ENCODE measurements at regions of chr1 and their contacts with region 1.

Region 1: GRCh38 chr1:169367486-169368405 is at the starts of genes BLZF1 and NME7:
- DNase-seq: peak; percentile 99
- ATAC-seq: peak; percentile 93
- H3K4me3 Mint-ChIP-seq: no peak within 1 kb of the TSS
- H3K27ac Mint-ChIP-seq: no peak within 1 kb of the TSS
- H3K4me1 Mint-ChIP-seq: peaks cover 31% of the 10 kb centered on the region
- H3K27me3 Mint-ChIP-seq: no peaks in the 10 kb centered on the region
- total RNA-seq, gene BLZF1: 6.5 to 7.1 TPM
- total RNA-seq, gene NME7: 11.6 to 15.3 TPM

Region 2: DNA sequence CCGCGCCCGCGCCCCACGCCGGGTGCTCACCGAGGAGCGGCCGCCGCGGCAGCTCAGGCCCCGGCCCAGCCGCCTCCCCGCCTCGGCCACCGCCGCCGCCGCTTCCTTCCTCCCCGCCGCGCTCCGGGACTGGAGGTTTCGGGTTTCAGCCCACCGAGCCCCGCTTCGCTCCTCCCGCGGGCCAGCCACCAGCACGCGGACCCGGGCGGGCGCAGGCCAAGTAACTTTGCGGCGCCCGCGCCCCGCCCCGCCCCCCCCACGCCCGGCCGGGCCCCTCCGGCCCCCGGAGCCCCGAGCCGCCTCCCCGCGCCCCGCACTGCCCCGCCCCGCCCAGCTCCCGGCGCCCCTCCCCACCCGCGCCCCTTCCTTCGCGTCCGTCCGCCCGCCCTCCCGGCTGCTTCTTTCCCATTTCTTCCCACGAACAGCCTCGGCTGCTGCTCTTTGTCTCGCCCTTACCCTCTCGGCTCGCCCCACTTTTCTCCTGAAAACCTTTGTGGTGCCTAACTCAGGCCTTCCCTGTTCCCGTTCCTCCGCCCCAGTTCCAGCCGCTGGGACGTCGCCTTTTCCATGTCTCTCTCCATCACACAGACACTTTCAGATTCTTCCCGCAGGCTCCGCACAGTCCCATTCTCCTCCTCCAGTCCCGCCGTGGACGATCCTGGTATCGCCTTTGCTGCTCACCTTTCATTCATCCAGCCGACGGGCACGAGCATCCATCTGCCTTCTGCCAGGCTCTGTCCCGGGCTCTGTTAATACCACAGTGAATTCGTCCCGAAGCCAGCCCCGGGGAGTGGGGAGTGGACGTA is 1230.8 kb before region 1 on chr1 and contains the start of gene GPR161:
- CTCF ChIA-PET with region 1: no interaction called
- POLR2A ChIA-PET with region 1: no interaction called
- intact Hi-C with region 1: loop called in 1 of 2 experiments (anchors 2 kb)
- DNase-seq: peak; percentile 40
- ATAC-seq: no peak
- H3K4me3 Mint-ChIP-seq: peak within 1 kb of the TSS; percentile 73
- H3K27ac Mint-ChIP-seq: peak within 1 kb of the TSS; percentile 61
- H3K4me1 Mint-ChIP-seq: peaks cover 40% of the 10 kb centered on the region
- H3K27me3 Mint-ChIP-seq: peaks cover 37% of the 10 kb centered on the region
- total RNA-seq, gene GPR161: 0.42 to 0.59 TPM

Region 3: GRCh38 chr1:168342572-168343280 is 1025.0 kb before region 1 on chr1:
- CTCF ChIA-PET with region 1: interaction called, 3 read pairs
- POLR2A ChIA-PET with region 1: no interaction called
- intact Hi-C with region 1: loop called (anchors 5 kb)
- DNase-seq: peak; percentile 94
- ATAC-seq: peak; percentile 98
- H3K4me3 Mint-ChIP-seq: no peak overlapping the region
- H3K27ac Mint-ChIP-seq: peak overlapping the region; percentile 27
- H3K4me1 Mint-ChIP-seq: peaks cover 24% of the 10 kb centered on the region
- H3K27me3 Mint-ChIP-seq: no peaks in the 10 kb centered on the region

Region 4: DNA sequence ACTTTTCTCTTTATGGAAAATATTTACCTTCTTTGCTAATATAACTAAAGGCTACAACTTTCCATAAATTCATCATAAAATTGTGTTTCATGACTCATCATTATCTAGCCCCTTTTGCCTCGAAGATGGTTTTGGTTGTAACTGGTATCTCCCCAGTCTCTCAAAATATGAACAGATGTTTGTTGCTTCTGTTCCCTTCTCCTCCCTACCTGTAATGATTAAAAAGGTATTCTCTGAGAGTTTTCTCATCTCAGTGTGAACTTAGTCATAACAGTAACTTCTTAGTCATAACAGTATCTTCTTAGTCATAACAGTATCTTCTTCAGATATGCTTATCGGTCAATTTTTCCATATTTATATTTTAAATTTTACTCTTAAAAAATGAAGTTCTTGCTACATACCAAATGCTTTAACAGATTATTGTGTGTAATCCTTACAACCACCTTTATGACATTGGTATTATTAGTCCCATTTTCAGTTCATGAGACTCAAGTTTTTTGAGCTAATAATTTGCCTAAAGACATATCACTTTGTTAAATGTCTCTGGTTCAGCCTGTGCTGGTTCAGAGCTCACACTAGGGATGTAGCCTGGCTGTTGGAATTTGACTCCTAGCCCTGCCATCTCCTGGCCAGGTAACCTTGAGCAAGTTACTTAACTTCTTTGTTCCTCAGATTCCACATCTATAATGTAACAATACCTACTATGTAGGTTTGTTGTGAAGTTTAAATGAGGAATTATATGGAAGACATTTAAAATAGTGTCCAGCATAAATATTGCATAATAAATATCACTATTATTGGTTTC is 228.7 kb before region 1 on chr1:
- CTCF ChIA-PET with region 1: no interaction called
- POLR2A ChIA-PET with region 1: no interaction called
- intact Hi-C with region 1: loop called (anchors 2 to 5 kb)
- DNase-seq: no peak
- ATAC-seq: peak; percentile 95
- H3K4me3 Mint-ChIP-seq: no peak overlapping the region
- H3K27ac Mint-ChIP-seq: no peak overlapping the region
- H3K4me1 Mint-ChIP-seq: peaks cover 12% of the 10 kb centered on the region
- H3K27me3 Mint-ChIP-seq: no peaks in the 10 kb centered on the region

Region 5: GRCh38 chr1:169586395-169587255 is 218.9 kb after region 1 on chr1 and contains the start of gene F5:
- CTCF ChIA-PET with region 1: no interaction called
- POLR2A ChIA-PET with region 1: no interaction called
- intact Hi-C with region 1: loop called in 1 of 2 experiments (anchors 2 kb)
- DNase-seq: peak; percentile 92
- ATAC-seq: peak; percentile 87
- H3K4me3 Mint-ChIP-seq: peak within 1 kb of the TSS; percentile 95
- H3K27ac Mint-ChIP-seq: peak within 1 kb of the TSS; percentile 97
- H3K4me1 Mint-ChIP-seq: peaks cover 65% of the 10 kb centered on the region
- H3K27me3 Mint-ChIP-seq: no peaks in the 10 kb centered on the region
- total RNA-seq, gene F5: 49.8 to 57.8 TPM

Region 6: DNA sequence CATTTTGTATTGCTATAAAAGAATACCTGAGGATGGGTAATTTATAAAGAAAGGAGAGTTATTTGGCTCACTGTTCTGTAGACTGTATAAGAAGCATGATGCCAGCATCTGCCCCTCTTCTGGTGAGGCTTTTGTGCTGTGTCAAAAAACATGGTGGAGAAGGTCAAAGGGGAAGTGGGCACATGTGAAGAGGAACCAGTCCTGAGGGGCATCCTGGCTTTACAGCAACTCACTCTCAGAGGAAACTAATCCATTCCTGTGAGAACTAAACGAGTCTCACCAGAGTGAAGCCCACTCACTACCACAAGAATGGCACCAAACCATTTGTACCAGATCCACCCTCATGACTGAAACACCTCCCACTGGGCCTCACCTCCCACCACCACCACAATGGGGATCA is 281.0 kb after region 1 on chr1:
- CTCF ChIA-PET with region 1: no interaction called
- POLR2A ChIA-PET with region 1: no interaction called
- intact Hi-C with region 1: no loop called
- DNase-seq: no peak
- ATAC-seq: peak; percentile 47
- H3K4me3 Mint-ChIP-seq: no peak overlapping the region
- H3K27ac Mint-ChIP-seq: peak overlapping the region; percentile 77
- H3K4me1 Mint-ChIP-seq: peaks cover 37% of the 10 kb centered on the region
- H3K27me3 Mint-ChIP-seq: no peaks in the 10 kb centered on the region

Region 7: GRCh38 chr1:169794530-169795416 is 427.0 kb after region 1 on chr1 and contains the start of gene METTL18:
- CTCF ChIA-PET with region 1: no interaction called
- POLR2A ChIA-PET with region 1: no interaction called
- intact Hi-C with region 1: loop called (anchors 1 to 5 kb)
- DNase-seq: peak; percentile 96
- ATAC-seq: peak; percentile 98
- H3K4me3 Mint-ChIP-seq: peak within 1 kb of the TSS; percentile 96
- H3K27ac Mint-ChIP-seq: peak within 1 kb of the TSS; percentile 98
- H3K4me1 Mint-ChIP-seq: peaks cover 46% of the 10 kb centered on the region
- H3K27me3 Mint-ChIP-seq: no peaks in the 10 kb centered on the region
- total RNA-seq, gene METTL18: 11.6 to 13.3 TPM

Region 8: DNA sequence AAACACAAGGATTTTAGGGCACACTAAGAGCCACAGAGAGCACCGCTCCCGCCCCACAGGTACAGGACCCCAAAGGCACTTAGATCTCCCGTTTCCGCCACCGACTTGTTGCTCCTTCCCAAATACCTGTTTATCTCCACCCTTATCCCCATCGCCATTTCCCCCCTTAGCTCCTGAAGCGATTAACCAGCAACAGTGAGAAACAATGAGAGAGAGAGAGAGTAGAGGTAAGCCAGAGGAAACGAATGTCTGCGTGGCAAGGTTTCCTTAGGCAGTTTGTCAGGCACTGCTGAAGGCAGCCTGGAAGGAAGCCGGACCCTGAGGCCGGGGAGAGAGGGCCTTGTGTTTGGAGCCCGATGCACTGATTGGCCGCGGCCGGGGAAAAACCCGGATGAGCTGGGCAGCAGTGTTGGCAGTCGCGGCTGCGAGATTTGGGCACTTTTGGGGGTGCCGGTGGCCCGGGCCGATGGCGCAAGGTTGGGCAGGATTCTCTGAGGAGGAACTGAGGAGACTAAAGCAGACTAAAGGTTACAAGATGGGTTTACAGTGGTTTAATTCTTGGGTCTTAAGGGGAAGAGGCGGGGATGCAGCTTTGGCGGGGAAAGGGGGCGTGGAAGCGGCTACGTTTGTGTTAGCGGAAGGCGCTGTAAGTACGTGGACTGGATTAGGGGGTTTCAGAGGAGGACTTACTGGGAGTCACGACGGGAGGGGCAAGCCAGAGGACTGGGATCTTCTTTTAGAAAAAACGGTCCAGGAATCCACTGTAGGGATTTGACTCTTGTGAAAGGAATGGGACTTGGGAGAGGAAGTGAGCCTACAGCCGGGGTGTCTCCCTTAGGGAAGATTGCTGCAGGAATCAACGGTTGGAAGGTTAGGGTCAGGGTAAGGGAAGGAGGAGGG is 1164.3 kb after region 1 on chr1 and contains the start of gene GORAB:
- CTCF ChIA-PET with region 1: no interaction called
- POLR2A ChIA-PET with region 1: no interaction called
- intact Hi-C with region 1: loop called in 1 of 2 experiments (anchors 2 kb)
- DNase-seq: peak; percentile 94
- ATAC-seq: peak; percentile 98
- H3K4me3 Mint-ChIP-seq: no peak within 1 kb of the TSS
- H3K27ac Mint-ChIP-seq: no peak within 1 kb of the TSS
- H3K4me1 Mint-ChIP-seq: peaks cover 15% of the 10 kb centered on the region
- H3K27me3 Mint-ChIP-seq: no peaks in the 10 kb centered on the region
- total RNA-seq, gene GORAB: 9.8 to 13.5 TPM